ENCODE measurements at regions of chr2 and their contacts with region 1.

Region 1: DNA sequence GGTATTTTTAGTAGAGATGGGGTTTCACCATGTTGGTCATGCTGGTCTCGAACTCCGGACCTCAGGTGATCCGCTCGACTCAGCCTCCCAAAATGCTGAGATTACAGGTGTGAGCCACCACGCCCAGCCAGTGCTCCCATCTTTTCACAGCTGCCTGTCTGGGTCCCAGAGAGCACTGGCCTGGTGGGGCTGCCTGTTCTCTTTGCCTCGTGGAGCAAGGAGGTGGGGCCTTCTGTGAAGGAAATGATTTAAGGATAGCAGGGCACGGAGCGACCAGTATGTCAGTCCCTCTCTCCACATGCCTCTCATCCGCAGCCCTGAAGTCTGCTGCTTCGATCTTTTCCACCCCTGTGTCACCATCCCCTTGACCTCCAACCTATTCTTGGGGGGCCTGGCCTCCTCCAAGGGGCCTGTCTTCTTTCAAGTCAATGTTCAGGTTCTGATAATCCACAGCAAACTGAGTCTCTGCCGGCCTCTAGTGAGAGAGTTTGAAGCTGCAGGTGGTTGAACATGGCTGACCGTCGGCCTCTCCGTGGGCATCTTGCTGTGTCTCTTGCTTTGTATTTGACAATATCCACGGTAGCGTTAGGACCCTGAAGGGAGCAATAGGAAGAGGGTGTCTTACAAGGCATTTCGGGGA is 28.2 kb upstream of the GIGYF2 start:
- DNase-seq: no peak
- H3K4me3 Mint-ChIP-seq: no peak overlapping the region
- H3K27ac Mint-ChIP-seq: no peak overlapping the region
- H3K4me1 Mint-ChIP-seq: no peaks in the 10 kb centered on the region
- H3K27me3 Mint-ChIP-seq: peaks cover 4% of the 10 kb centered on the region

Region 2: GRCh38 chr2:232611551-232612218 is 57.2 kb before region 1 on chr2:
- CTCF ChIA-PET with region 1: interaction called, 3 read pairs
- POLR2A ChIA-PET with region 1: no interaction called
- intact Hi-C with region 1: loop called (anchors 5 kb)
- DNase-seq: peak; percentile 79
- H3K4me3 Mint-ChIP-seq: no peak overlapping the region
- H3K27ac Mint-ChIP-seq: no peak overlapping the region
- H3K4me1 Mint-ChIP-seq: no peaks in the 10 kb centered on the region
- H3K27me3 Mint-ChIP-seq: no peaks in the 10 kb centered on the region

Region 3: DNA sequence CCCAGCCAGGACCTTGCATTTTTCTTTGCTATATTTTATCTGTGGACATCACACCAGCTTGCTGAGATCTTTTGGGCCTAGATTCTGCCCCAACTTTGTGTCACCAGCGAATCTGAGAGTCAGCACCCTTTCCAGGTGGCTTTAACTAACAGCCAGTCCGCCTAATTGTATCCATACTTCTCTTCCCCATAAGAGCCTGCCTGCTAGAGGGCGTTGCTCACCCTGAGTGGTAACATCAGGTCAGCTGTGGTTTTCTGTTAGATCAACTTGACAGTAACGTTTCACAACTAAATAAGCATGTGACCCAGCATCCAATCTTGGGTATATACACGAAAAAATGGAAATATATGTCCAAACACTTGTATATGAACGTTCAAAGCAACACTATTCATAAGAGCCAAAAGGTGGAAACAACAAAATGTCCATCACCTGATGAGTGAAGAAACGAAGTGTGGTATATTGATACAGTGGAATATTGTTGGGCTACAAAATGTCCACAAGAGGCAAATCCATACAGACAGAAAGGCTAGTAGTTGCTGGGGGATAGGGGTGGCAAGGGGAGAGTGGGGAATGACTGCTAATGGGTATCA is 10.6 kb before region 1 on chr2:
- CTCF ChIA-PET with region 1: no interaction called
- POLR2A ChIA-PET with region 1: no interaction called
- intact Hi-C with region 1: no loop called
- DNase-seq: no peak
- H3K4me3 Mint-ChIP-seq: no peak overlapping the region
- H3K27ac Mint-ChIP-seq: no peak overlapping the region
- H3K4me1 Mint-ChIP-seq: no peaks in the 10 kb centered on the region
- H3K27me3 Mint-ChIP-seq: no peaks in the 10 kb centered on the region

Measured in activated CD4-positive, alpha-beta memory T cell treated with anti-CD3 and anti-CD28 coated beads for 36 hours (primary cell).